Activated B cell treated with CpG ODN at 0.5 μM for 24 hours (primary cell): ENCODE measurements at regions of chr5 and their contacts with region 1.

Region 1: DNA sequence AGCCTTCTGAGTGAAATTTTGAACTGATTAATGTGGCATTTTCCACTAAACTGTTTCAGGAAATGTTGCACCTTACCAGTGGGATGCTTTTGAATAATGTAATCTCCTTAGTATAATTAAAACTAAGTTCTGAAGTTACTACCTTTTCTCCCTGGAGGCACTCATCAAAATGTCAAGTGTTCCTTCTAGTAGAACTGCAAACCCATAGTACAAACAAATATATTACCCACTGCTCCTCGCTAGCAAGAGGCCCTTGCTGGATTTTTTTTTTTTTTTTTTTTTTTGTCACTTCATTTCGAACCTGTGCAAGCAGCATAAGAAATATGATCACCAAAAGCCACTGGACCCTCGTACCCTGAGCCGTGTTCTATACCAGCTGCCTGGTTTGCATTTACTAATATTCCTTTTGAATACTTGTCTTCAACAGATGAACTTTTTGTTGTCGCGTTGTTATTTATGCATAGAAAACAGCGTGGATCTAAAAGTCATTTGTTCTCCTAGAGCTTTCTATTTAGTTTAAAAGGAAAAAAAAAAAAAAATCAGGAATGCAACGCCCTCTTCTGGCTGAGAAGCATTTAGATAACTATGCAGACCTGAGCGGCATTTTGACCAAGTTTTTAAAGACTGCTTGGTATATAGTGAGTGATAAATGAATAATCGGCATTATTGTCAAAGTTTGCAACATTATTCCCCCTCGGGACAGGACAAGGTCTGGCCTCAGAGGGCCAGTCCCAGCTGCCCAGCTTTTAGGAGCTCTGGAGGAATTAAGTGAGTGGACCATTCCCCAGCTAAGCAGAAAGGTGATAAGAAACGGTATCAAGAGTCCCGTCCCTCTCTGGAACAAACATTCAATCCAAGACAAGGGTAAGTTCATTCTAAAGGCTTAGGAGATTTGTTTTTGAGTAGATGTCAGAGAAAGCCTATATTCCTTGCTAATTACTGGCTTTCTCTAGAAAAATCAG is 162.5 kb upstream of the KIF2A start:
- DNase-seq: no peak
- ATAC-seq: no peak
- H3K4me3 Mint-ChIP-seq: no peak overlapping the region
- H3K27ac Mint-ChIP-seq: no peak overlapping the region
- H3K4me1 Mint-ChIP-seq: no peaks in the 10 kb centered on the region
- H3K27me3 Mint-ChIP-seq: peaks cover 25% of the 10 kb centered on the region
- CTCF ChIP-seq: no peak

Region 2: DNA sequence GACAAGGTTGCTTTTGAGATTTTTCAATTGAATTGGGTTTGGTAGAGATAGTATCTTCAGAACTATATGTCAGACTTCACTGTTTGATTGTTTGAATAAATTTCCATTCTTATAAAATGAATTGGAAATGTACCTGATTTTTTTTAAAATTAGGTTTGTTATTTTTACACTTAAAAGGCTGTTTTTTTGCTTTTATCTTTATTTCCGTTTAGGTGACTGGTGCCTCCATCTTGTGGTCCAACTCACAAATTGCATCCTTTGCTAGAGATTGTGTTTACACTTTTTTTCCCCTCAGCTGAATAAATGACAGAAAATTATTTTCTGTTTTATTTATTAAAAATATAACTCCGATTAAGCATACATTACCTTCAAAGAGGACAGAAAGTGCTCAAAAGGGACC is 1183.0 kb before region 1 on chr5:
- CTCF ChIA-PET with region 1: no interaction called
- POLR2A ChIA-PET with region 1: no interaction called
- intact Hi-C with region 1: loop called (anchors 5 kb)
- DNase-seq: no peak
- ATAC-seq: no peak
- H3K4me3 Mint-ChIP-seq: no peak overlapping the region
- H3K27ac Mint-ChIP-seq: no peak overlapping the region
- H3K4me1 Mint-ChIP-seq: peaks cover 2% of the 10 kb centered on the region
- H3K27me3 Mint-ChIP-seq: no peaks in the 10 kb centered on the region
- CTCF ChIP-seq: no peak

Region 3: GRCh38 chr5:61055434-61056006 is 1088.0 kb before region 1 on chr5:
- CTCF ChIA-PET with region 1: no interaction called
- POLR2A ChIA-PET with region 1: no interaction called
- intact Hi-C with region 1: loop called (anchors 5 kb)
- DNase-seq: no peak
- ATAC-seq: peak; percentile 45
- H3K4me3 Mint-ChIP-seq: no peak overlapping the region
- H3K27ac Mint-ChIP-seq: no peak overlapping the region
- H3K4me1 Mint-ChIP-seq: no peaks in the 10 kb centered on the region
- H3K27me3 Mint-ChIP-seq: no peaks in the 10 kb centered on the region
- CTCF ChIP-seq: no peak